ENCODE measurements at regions of chr17 and their contacts with region 1.

Region 1: GRCh38 chr17:12983991-12984884 is 33.6 kb downstream of the ELAC2 start:
- DNase-seq: no peak

Region 2: DNA sequence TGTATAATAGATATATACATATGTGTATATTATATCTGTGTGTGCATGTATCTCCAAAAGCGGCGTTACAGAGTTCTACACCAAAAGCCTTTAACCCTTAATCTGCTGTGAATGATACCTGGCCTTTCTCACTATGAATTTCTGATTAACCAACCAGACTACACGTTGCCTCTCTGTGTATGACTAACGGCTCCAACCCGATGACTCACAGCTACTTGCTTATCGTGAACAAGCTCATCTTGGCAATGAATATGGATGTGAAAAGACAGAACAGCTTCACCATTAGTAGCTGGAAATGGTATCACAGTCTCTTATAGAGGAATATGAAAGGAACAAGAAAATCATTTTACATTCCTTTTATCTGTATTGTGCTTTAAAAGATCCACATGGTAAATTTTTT is 218.7 kb before region 1 on chr17:
- intact Hi-C with region 1: loop called (anchors 10 kb)
- DNase-seq: no peak